Vagina (tissue), 2 donors: ENCODE measurements at regions of chr10 and their contacts with region 1.

Region 1: GRCh38 chr10:77027576-77027975 is 610.0 kb downstream of the KCNMA1 start:
- DNase-seq: no peak
- H3K4me3 ChIP-seq: no peak overlapping the region
- H3K27ac ChIP-seq: no peak overlapping the region
- H3K4me1 ChIP-seq: no peaks in the 10 kb centered on the region
- H3K27me3 ChIP-seq: no peaks in the 10 kb centered on the region
- CTCF ChIP-seq: no peak
- POLR2A ChIP-seq: no peak

Region 2: GRCh38 chr10:75950997-75951589 is 1076.5 kb before region 1 on chr10:
- intact Hi-C with region 1: no loop called
- DNase-seq: peak in 1 of 2 donors; percentile 34
- H3K4me3 ChIP-seq: no peak overlapping the region
- H3K27ac ChIP-seq: no peak overlapping the region
- H3K4me1 ChIP-seq: no peaks in the 10 kb centered on the region
- H3K27me3 ChIP-seq: no peaks in the 10 kb centered on the region
- CTCF ChIP-seq: no peak
- POLR2A ChIP-seq: no peak

Region 3: GRCh38 chr10:77062381-77062780 is 34.8 kb after region 1 on chr10:
- intact Hi-C with region 1: no loop called
- DNase-seq: no peak
- H3K4me3 ChIP-seq: no peak overlapping the region
- H3K27ac ChIP-seq: no peak overlapping the region
- H3K4me1 ChIP-seq: no peaks in the 10 kb centered on the region
- H3K27me3 ChIP-seq: no peaks in the 10 kb centered on the region
- CTCF ChIP-seq: no peak
- POLR2A ChIP-seq: no peak

Region 4: GRCh38 chr10:77104459-77104980 is 76.9 kb after region 1 on chr10:
- intact Hi-C with region 1: loop called (anchors 10 kb)
- DNase-seq: peak in 1 of 2 donors; percentile 93
- H3K4me3 ChIP-seq: no peak overlapping the region
- H3K27ac ChIP-seq: peak overlapping the region; percentile 53
- H3K4me1 ChIP-seq: peaks cover 20% of the 10 kb centered on the region
- H3K27me3 ChIP-seq: no peaks in the 10 kb centered on the region
- CTCF ChIP-seq: no peak
- POLR2A ChIP-seq: no peak

Region 5: DNA sequence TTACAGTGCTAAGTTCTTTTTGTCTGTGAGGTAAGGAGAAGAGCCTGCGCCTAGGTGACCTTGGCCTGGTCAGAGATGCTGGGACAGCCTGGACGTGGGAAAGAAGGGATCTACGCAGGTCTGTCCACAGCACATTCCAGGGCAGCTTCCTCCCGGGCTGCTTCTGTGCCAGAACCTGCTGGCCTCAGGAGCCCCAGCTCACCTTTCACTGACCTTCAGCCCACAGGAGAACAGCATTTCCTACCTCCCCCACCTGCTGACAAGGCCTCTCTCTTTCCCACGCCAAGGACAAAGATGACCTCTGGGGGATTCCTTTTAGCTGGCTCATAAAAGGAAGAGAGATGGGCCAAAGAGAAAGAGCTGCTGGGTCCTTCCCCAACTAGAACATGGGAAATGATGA is 349.5 kb after region 1 on chr10:
- intact Hi-C with region 1: no loop called
- DNase-seq: no peak
- H3K4me3 ChIP-seq: no peak overlapping the region
- H3K27ac ChIP-seq: no peak overlapping the region
- H3K4me1 ChIP-seq: no peaks in the 10 kb centered on the region
- H3K27me3 ChIP-seq: no peaks in the 10 kb centered on the region
- CTCF ChIP-seq: no peak
- POLR2A ChIP-seq: no peak